Motor neuron (in vitro differentiated cells): ENCODE measurements at regions of chr11 and their contacts with region 1.

Region 1: DNA sequence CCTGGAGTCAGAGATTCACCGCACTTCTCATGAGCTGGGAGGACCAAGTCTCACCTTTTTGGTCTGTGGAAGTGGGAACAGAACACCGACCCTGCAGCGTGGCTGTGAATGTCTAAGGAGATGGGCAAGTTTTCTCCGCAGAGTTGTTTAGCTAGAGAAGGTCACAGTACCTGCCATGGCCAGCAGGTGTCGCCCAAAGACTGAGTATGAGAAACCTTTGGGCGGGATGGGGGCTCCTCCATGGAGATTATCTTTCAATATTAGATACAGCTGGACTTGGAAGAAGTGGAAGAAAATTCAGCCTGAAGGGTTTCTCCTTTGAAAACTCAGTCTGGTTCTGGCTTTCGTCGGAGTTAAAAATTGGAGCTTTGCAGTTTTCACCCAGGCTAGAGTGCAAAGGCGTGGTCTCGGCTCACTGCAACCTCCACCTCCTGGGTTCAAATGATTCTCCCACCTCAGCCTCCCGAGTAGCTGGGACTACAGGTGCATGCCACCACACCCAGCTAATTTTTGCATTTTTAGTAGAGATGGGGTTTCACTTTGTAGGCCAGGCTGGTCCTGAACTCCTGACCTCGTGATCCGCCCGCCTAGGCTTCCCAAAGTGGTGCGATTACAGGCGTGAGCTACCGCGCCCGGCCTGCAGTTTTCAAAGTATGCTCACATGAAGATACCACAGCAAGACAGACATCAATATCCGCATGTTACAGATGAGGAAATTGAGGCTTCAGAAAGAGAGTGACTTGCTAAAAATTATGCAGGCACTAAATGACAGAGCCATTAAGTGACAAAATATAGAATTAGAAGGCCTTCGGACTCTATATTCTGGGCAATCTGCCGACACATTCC is 10.7 kb upstream of the DSCAML1 start:
- ATAC-seq: peak in 5 of 8 experiments; percentile 19 to 53 (median 29)
- H3K4me3 ChIP-seq: no peak overlapping the region
- H3K27ac ChIP-seq: no peak overlapping the region
- H3K4me1 ChIP-seq: peaks cover 3 to 8% of the 10 kb centered on the region in 2 donors

Region 2: GRCh38 chr11:117443266-117444195 is 364.2 kb before region 1 on chr11:
- in situ Hi-C with region 1: loop called in 8 of 9 experiments (anchors 10 to 25 kb)
- ATAC-seq: peak; percentile 82 to 98 (median 96)
- H3K4me3 ChIP-seq: no peak overlapping the region
- H3K27ac ChIP-seq: no peak overlapping the region
- H3K4me1 ChIP-seq: peaks cover 20 to 21% of the 10 kb centered on the region in 2 donors

Region 3: DNA sequence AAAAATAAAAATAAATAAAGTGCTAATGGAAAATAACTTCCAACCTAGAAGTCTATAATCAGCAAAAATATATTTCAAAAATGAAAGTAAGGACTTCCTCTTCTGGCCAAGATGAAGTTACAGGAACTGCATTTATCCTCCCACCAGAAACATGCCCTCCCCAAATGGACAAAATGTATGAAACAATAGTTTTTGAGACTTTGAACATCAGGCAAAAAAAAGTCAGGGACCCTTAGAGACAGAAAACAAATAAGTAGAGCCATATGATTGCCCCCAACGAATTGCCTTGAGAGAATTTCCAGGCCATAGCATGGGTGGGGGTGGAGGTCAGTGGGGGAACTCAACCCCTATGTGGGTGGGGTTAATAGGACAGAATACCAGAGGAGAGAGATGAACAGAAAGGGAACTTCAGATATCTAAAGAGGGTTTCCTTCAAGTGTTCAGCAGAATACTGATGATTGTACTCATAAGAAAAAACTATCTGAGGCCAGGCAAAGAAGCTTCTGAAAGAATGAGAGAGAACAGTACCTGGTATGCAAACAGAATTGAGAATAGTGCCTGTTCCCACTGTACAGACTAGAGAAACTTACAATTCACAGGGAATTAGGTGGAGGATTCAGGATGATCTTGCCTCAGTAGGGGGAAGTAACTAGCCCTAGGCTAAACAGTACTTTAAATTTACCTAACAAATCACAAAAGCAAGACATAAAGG is 151.9 kb after region 1 on chr11:
- in situ Hi-C with region 1: no loop called
- ATAC-seq: no peak
- H3K4me3 ChIP-seq: no peak overlapping the region
- H3K27ac ChIP-seq: no peak overlapping the region
- H3K4me1 ChIP-seq: no peaks in the 10 kb centered on the region